ENCODE measurements at regions of chr17 and their contacts with region 1.

Region 1: DNA sequence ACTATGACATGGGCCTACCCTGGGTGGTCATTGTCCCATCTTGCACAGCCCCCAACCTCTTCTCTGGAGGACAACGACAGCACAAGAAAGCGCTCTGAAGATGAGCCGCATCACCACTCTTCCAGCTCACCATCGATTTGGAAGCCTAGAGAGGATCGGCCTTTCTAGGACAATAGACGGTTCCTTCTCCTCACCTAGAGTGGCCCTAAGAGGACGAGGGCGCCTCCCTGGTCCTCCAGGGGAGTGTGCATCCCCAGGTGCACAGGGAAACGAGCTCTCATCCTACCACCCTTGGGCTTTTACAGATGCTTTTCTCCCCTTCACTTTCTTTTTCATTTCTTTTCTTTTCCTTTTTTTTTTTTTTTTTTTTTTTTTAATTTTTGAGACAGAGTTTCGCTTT is 20.3 kb upstream of the SLC52A1 start:
- DNase-seq: no peak
- ATAC-seq: no peak
- H3K4me3 Mint-ChIP-seq: no peak overlapping the region
- H3K27ac Mint-ChIP-seq: no peak overlapping the region
- H3K4me1 Mint-ChIP-seq: peaks cover 2% of the 10 kb centered on the region
- H3K27me3 Mint-ChIP-seq: no peaks in the 10 kb centered on the region

Region 2: GRCh38 chr17:5031365-5032082 is 24.0 kb before region 1 on chr17:
- CTCF ChIA-PET with region 1: interaction called, 103 read pairs
- DNase-seq: peak; percentile 91
- ATAC-seq: peak; percentile 79
- H3K4me3 Mint-ChIP-seq: peak overlapping the region; percentile 80
- H3K27ac Mint-ChIP-seq: peak overlapping the region; percentile 93
- H3K4me1 Mint-ChIP-seq: peaks cover 25% of the 10 kb centered on the region
- H3K27me3 Mint-ChIP-seq: no peaks in the 10 kb centered on the region

Region 3: DNA sequence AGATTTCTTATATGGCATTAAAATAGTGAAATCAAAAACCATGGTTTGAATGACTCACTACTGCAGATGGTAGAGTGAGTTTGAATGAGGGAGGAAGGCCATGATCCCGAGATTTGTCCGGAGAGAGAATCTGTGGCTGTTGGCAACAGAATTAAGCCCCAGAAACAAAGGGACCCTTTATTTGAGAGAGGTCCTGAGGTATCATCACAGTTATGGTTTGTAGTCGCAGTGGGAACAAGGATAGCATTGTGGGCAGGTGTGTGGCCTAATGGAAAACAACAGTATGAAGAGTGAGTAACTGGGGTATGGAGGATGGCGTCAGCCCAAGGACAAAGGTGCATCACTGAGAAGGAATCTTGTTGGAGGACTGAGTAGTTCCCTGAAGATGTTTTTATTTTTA is 14.2 kb after region 1 on chr17:
- CTCF ChIA-PET with region 1: no interaction called
- DNase-seq: no peak
- ATAC-seq: no peak
- H3K4me3 Mint-ChIP-seq: no peak overlapping the region
- H3K27ac Mint-ChIP-seq: no peak overlapping the region
- H3K4me1 Mint-ChIP-seq: no peaks in the 10 kb centered on the region
- H3K27me3 Mint-ChIP-seq: no peaks in the 10 kb centered on the region

Measured in activated CD8-positive, alpha-beta memory T cell treated with anti-CD3 and anti-CD28 coated beads, Interleukin-2, amount 10 ng/mL, durations not matched to agents 7 days and 5 days (primary cell).